Mucosa of descending colon (tissue), 3 donors: ENCODE measurements at regions of chr18 and their contacts with region 1.

Region 1: DNA sequence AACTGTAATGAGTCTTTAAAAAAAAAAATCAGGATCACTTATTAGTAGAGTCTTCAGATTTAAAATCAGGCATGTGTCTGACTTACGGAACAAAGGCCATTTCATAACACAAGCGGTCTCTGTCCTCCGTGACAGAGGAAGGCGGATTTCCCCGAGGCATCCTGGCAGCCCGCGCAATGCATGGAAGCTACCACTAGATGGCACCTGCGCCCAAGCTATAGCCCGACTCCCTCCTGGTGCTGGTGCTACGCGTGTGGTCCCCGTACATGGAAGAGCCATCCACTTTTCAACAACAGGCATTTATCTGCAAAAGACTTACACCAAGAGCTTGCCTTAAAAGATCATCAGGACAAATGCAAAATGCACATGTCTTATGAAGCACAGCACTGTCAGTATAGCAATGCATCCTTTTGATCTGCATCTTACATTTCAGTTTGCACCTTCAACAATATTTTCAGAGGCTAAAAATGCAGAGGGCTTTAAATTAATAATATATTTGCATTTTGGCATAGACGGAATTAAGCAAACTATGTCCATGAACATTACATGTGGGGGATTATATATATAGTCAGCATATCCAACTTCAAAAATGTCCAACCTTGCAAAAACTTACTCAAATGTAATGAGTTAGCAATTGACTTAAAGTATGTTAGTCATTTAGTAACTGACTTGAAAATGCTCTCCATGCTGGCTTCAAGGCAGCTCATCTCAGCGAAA is 96.0 kb downstream of the ZNF516 start:
- DNase-seq: peak; percentile 83 to 88 (median 85)
- ATAC-seq: peak; percentile 96
- H3K4me3 ChIP-seq: no peak overlapping the region
- H3K4me1 ChIP-seq: no peaks in the 10 kb centered on the region
- CTCF ChIP-seq: peak; percentile 95

Region 2: GRCh38 chr18:76686737-76687262 is 287.7 kb after region 1 on chr18:
- intact Hi-C with region 1: loop called in 1 of 2 experiments (anchors 5 kb)
- DNase-seq: peak in 2 of 3 donors; percentile 48 to 56
- ATAC-seq: peak; percentile 78
- H3K4me3 ChIP-seq: no peak overlapping the region
- H3K4me1 ChIP-seq: no peaks in the 10 kb centered on the region
- CTCF ChIP-seq: peak; percentile 13

Region 3: DNA sequence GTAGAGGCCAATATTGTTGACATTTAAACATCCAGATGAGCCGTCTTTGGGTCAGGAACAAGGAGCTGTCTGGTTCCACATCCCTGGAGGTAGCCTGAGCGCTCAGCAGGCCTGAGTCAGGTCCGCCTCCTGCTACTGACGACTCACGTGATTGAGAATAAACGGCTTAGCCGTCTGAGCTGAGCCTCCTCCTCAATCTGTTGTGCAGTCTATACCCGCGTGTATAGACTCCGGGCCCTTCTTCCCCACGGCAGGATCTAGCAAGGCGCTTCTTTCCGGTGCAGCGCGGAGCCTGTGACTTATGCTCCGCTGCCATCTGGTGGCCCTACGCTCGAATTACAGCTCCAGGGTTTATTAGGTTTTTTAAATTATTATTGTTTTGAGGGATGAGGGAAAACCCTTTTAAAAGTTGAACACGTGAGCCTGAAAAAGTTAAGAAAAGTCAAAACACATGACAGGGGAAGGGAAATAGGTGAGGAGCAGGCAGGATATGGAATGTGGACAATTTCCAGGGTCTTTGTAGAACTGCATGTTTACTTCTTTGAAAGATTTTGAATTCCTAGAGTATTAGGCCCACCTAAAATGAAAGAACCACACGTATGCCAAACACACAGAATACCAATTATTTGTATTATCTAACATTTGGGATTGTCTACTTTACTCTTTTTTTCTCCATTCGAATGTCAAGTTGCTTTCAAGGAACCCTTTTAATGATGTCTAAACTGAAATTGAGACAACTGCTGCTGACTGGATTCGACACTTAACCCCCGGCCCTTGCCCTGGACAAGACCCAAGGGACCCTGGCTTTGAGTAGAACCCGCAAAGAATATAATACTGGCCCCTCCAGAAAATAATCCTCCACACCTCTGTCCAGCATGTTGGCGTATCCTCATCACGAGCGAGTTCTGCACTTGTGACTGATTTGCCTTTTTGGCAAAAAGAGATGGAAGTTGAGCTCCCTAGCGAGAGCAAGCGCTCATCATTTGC is 310.9 kb after region 1 on chr18:
- intact Hi-C with region 1: loop called in 1 of 2 experiments (anchors 10 kb)
- DNase-seq: peak in 2 of 3 donors; percentile 61 to 71
- ATAC-seq: peak; percentile 86
- H3K4me3 ChIP-seq: no peak overlapping the region
- H3K4me1 ChIP-seq: no peaks in the 10 kb centered on the region
- CTCF ChIP-seq: peak; percentile 58